Activated CD4-positive, alpha-beta memory T cell treated with anti-CD3 and anti-CD28 coated beads for 36 hours (primary cell): ENCODE measurements at regions of chr9 and their contacts with region 1.

Region 1: DNA sequence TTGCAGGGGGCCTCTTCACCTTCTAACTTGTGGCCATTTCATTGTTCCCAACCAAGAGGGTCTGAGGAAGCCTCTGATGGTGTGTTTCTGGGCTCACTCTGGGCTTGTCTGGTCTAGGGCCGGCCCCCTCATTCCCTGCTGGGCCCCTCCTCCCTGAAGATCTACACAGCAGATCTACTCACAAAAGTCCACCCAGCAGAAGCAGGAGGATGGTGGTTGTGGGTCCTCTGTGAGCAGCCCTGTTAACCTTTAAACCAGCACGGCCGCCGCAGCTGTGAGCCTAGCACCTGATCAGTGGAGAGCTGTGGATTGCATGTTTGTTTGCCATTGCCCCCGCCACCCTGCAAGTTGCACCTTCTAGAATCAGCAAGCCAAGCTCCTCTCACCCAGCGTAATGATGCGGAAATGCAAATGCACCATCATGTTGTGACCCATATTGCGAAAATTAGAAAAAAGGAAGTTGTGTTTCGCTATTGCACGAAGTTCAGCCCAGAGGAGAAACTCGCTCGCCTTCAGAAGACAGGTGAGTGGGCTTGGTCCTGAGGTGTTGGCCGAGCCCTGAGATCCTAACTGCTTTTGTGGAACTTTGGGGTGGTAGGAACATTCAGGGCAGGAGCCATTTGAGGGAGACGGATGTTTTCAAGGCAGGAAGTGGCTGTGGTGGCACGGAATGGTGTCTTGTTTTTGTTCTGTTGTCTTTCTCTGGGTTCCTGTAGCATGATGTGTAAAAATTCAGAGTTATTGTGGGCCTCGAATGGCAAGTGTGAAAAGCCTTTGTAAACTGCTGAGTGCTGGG is 16.7 kb downstream of the FGD3 start:
- DNase-seq: peak; percentile 86
- H3K4me3 Mint-ChIP-seq: peak overlapping the region; percentile 96
- H3K27ac Mint-ChIP-seq: peak overlapping the region; percentile 100
- H3K4me1 Mint-ChIP-seq: peaks cover 57% of the 10 kb centered on the region
- H3K27me3 Mint-ChIP-seq: no peaks in the 10 kb centered on the region

Region 2: GRCh38 chr9:92607773-92608172 is 356.3 kb before region 1 on chr9:
- CTCF ChIA-PET with region 1: no interaction called
- POLR2A ChIA-PET with region 1: no interaction called
- intact Hi-C with region 1: no loop called
- DNase-seq: no peak
- H3K4me3 Mint-ChIP-seq: no peak overlapping the region
- H3K27ac Mint-ChIP-seq: no peak overlapping the region
- H3K4me1 Mint-ChIP-seq: no peaks in the 10 kb centered on the region
- H3K27me3 Mint-ChIP-seq: no peaks in the 10 kb centered on the region

Region 3: GRCh38 chr9:92980085-92980745 is 16.2 kb after region 1 on chr9:
- CTCF ChIA-PET with region 1: interaction called, 4 read pairs
- POLR2A ChIA-PET with region 1: interaction called, 6 read pairs
- intact Hi-C with region 1: loop called (anchors 1 kb)
- DNase-seq: peak; percentile 25
- H3K4me3 Mint-ChIP-seq: peak overlapping the region; percentile 41
- H3K27ac Mint-ChIP-seq: peak overlapping the region; percentile 90
- H3K4me1 Mint-ChIP-seq: peaks cover 67% of the 10 kb centered on the region
- H3K27me3 Mint-ChIP-seq: no peaks in the 10 kb centered on the region